ENCODE measurements at regions of chr7 and their contacts with region 1.

Region 1: GRCh38 chr7:66204822-66205740 is at the start of gene TPST1:
- DNase-seq: peak; percentile 100
- H3K4me3 ChIP-seq: peak within 1 kb of the TSS; percentile 72 to 94
- H3K27ac ChIP-seq: peak within 1 kb of the TSS; percentile 42 to 81; a peak in 3 of 4 replicates
- H3K4me1 ChIP-seq: peaks cover 11 to 18% of the 10 kb centered on the region in 2 experiments; a peak in 3 of 4 replicates
- H3K27me3 ChIP-seq: no peaks in the 10 kb centered on the region
- CTCF ChIP-seq: peak; percentile 61
- EP300 ChIP-seq: no peak; a peak in 2 of 4 replicates
- RAD21 ChIP-seq: peak; percentile 50
- polyA plus RNA-seq, gene TPST1: 36.4 and 46.4 TPM in 2 replicates

Region 2: GRCh38 chr7:65809259-65809981 is 395.7 kb before region 1 on chr7:
- CTCF ChIA-PET with region 1: no interaction called
- POLR2A ChIA-PET with region 1: no interaction called
- DNase-seq: no peak
- H3K4me3 ChIP-seq: no peak overlapping the region
- H3K27ac ChIP-seq: no peak overlapping the region
- H3K4me1 ChIP-seq: no peaks in the 10 kb centered on the region
- H3K27me3 ChIP-seq: no peaks in the 10 kb centered on the region
- CTCF ChIP-seq: no peak
- EP300 ChIP-seq: no peak
- RAD21 ChIP-seq: no peak

Region 3: GRCh38 chr7:66114793-66115649 is 90.1 kb before region 1 on chr7 and contains the start of gene CRCP:
- CTCF ChIA-PET with region 1: no interaction called
- POLR2A ChIA-PET with region 1: interaction called, 12 read pairs
- DNase-seq: peak; percentile 95
- H3K4me3 ChIP-seq: peak within 1 kb of the TSS; percentile 64 to 80
- H3K27ac ChIP-seq: peak within 1 kb of the TSS; percentile 88 to 93
- H3K4me1 ChIP-seq: peaks cover 18 to 21% of the 10 kb centered on the region in 2 experiments; a peak in 2 of 4 replicates
- H3K27me3 ChIP-seq: no peaks in the 10 kb centered on the region
- CTCF ChIP-seq: peak; percentile 62
- EP300 ChIP-seq: no peak
- RAD21 ChIP-seq: peak; percentile 42; the same call in 1 of the 2 replicates
- polyA plus RNA-seq, gene CRCP: 34.0 and 34.1 TPM in 2 replicates

Region 4: DNA sequence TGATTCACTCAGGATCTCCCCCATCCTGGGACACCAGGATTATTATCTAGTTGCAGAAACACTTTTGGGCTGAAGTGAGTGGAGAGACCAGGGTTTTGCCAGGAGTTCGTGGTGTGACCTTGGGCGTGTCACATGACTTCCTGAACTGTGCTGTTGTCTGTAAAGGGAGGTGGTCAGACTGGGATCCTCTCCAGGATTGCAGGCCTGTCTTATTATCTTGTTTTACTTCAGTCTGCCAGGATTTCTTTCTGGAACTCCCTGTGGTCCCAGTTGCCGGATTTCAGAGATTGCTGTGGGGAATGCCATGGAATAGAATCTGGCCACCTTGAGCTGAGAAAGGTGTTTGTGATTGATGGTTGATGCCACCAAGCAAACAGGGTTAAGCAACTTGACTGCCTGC is 54.6 kb before region 1 on chr7:
- CTCF ChIA-PET with region 1: interaction called, 17 read pairs
- POLR2A ChIA-PET with region 1: interaction called, 4 read pairs
- DNase-seq: peak; percentile 51
- H3K4me3 ChIP-seq: no peak overlapping the region
- H3K27ac ChIP-seq: peak overlapping the region; percentile 23 to 84; a peak in 3 of 4 replicates
- H3K4me1 ChIP-seq: peaks cover 20 to 51% of the 10 kb centered on the region in 2 experiments
- H3K27me3 ChIP-seq: no peaks in the 10 kb centered on the region
- CTCF ChIP-seq: no peak
- EP300 ChIP-seq: peak; percentile 15 to 79; a peak in 3 of 4 replicates
- RAD21 ChIP-seq: peak; percentile 35